Mammary epithelial cell (primary cell): ENCODE measurements at regions of chr6 and their contacts with region 1.

Region 1: DNA sequence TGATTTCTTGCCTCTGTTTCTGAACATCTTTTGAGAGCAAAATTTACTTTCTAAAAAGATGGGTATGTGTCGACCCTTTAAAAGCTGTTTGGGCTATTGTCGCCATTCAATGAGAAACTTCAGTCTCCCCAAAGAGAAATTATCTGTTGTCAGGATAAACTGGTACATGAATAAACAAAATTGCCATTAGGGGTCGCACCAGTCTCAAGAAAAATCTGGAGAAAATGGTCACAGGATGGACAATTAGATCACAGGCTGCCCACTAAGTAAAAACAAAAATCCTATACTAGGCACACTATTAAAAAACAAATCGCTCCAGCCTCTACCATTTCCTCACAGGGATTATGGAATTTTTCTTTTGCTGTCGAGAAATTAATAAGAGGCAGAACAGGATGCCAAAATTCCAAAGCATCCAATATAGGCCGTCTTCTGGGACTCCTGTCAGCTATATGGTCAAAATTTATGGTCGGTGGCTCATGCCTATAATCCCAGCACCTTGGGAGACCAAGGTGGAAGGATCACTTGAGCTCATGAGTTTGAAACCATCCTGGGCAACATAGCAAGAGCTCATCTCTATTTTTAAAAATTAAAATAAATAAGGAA is 5.5 kb upstream of the HLA-E start:
- DNase-seq: peak; percentile 50
- H3K4me3 ChIP-seq: no peak overlapping the region
- H3K27ac ChIP-seq: no peak overlapping the region
- H3K4me1 ChIP-seq: peaks cover 15% of the 10 kb centered on the region
- H3K27me3 ChIP-seq: peaks cover 10% of the 10 kb centered on the region
- CTCF ChIP-seq: peak; percentile 50 to 60

Region 2: GRCh38 chr6:30533460-30534294 is 49.9 kb after region 1 on chr6:
- CTCF ChIA-PET with region 1: interaction called, 4 read pairs
- dilution Hi-C with region 1: no loop called
- in situ Hi-C with region 1: no loop called
- intact Hi-C with region 1: loop called (anchors 1 kb)
- DNase-seq: no peak
- H3K4me3 ChIP-seq: no peak overlapping the region
- H3K27ac ChIP-seq: no peak overlapping the region
- H3K4me1 ChIP-seq: no peaks in the 10 kb centered on the region
- H3K27me3 ChIP-seq: no peaks in the 10 kb centered on the region
- CTCF ChIP-seq: no peak

Region 3: DNA sequence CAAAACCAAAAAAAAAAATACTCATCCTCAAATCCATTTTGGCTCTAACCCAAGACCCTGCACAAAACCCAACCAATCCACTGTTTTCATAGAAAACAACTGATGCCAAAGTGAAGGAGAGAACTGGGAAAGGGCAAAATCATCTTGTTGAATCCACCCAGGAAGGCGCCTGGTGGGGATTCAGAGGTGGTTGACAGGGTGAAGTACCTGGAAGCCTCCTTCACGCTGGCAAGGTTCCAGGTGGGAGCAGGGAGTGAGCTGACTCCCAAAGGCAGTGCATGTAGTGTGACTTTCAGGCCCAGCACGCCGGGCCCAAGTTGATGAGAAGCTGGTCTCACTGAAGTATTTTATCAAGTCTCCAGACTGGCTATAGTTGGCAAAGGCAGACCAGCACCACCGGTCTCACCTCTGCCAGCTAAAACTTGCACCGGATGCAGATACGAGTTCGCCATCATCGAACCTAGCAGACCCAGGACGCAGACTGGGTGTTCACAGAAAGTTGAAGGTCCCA is 116.7 kb after region 1 on chr6:
- CTCF ChIA-PET with region 1: interaction called, 3 read pairs
- dilution Hi-C with region 1: no loop called
- in situ Hi-C with region 1: no loop called
- intact Hi-C with region 1: loop called (anchors 1 kb)
- DNase-seq: no peak
- H3K4me3 ChIP-seq: no peak overlapping the region
- H3K27ac ChIP-seq: no peak overlapping the region
- H3K4me1 ChIP-seq: no peaks in the 10 kb centered on the region
- H3K27me3 ChIP-seq: no peaks in the 10 kb centered on the region
- CTCF ChIP-seq: no peak

Region 4: DNA sequence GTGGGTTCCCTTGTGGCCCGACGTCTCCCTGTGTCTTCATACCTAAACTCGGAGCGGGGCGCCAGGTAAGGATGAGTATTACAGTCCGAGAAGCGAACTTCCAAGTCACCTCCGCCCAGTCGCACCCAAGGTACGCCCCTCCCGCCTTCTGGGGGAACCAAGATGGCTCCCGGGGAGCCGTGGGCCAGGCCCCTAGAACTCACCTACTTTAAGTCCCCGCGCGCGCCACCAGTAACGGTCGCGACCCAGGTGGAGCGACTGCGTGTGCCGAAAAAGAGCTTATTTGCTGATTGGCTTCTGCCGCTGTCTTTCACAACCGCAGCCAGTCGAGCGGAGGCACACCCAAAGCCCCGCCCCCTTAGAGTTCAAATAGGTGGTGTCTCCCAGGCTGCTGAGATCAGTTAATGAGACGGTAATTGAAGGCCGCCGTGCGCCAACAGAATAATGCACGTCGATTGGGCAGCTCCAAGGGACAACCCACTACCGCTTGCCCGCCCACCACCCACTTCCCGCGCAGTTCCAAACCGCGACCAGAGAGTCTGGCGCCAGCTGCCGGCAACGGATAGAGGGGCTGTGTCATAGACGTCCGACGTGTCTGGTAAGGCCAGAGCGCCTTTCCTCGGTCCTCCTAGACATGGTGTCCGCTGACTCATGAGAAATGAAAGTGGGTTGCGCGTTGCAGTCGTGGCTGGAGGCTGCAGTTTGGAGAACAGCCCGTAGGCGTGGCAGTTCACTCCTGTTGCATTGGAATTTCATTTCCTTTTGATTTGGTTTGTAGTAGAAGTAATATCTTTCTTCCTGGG is 233.5 kb after region 1 on chr6 and contains the start of gene MDC1:
- CTCF ChIA-PET with region 1: no interaction called
- dilution Hi-C with region 1: no loop called
- in situ Hi-C with region 1: no loop called
- intact Hi-C with region 1: loop called (anchors 2 kb)
- DNase-seq: peak; percentile 100
- H3K4me3 ChIP-seq: peak within 1 kb of the TSS; percentile 56 to 69 (median 61)
- H3K27ac ChIP-seq: peak within 1 kb of the TSS; percentile 78
- H3K4me1 ChIP-seq: peaks cover 33% of the 10 kb centered on the region
- H3K27me3 ChIP-seq: no peaks in the 10 kb centered on the region
- CTCF ChIP-seq: peak in 1 of 2 donors; percentile 43
- total RNA-seq, gene MDC1: 12.8 to 36.7 TPM

Region 5: GRCh38 chr6:30877419-30878371 is 393.9 kb after region 1 on chr6:
- CTCF ChIA-PET with region 1: interaction called, 5 read pairs
- dilution Hi-C with region 1: no loop called
- in situ Hi-C with region 1: no loop called
- intact Hi-C with region 1: loop called (anchors 2 kb)
- DNase-seq: peak; percentile 80
- H3K4me3 ChIP-seq: peak overlapping the region in 2 of 3 experiments; percentile 13 to 20
- H3K27ac ChIP-seq: peak overlapping the region; percentile 63
- H3K4me1 ChIP-seq: peaks cover 37% of the 10 kb centered on the region
- H3K27me3 ChIP-seq: no peaks in the 10 kb centered on the region
- CTCF ChIP-seq: peak; percentile 92 to 96

Region 6: GRCh38 chr6:31087494-31088089 is 603.8 kb after region 1 on chr6:
- CTCF ChIA-PET with region 1: no interaction called
- dilution Hi-C with region 1: no loop called
- in situ Hi-C with region 1: no loop called
- intact Hi-C with region 1: loop called (anchors 2 kb)
- DNase-seq: peak; percentile 73
- H3K4me3 ChIP-seq: no peak overlapping the region
- H3K27ac ChIP-seq: no peak overlapping the region
- H3K4me1 ChIP-seq: peaks cover 8% of the 10 kb centered on the region
- H3K27me3 ChIP-seq: no peaks in the 10 kb centered on the region
- CTCF ChIP-seq: peak; percentile 74